Activated naive CD4-positive, alpha-beta T cell treated with anti-CD3 and anti-CD28 coated beads for 36 hours (primary cell): ENCODE measurements at regions of chr10 and their contacts with region 1.

Region 1: DNA sequence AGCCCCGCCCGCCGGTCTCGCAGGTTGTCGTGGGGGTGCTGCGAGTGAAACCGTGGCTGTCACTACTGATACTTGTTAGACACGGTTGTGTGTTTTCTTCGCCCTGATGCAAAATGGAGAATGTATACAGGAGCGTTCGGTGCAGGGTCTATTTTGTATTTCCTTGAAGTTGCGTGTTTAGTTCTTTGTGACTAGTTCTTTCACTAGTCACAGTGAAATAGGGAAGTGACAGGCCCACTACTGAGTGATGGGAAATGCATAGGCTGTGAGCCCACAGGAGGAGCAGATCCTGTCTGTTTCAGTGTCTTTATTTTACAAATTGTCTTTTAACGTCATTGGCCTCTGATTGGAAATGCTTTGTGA is 675 bp downstream of the ABRAXAS2 start:
- DNase-seq: peak; percentile 44
- H3K4me3 Mint-ChIP-seq: peak overlapping the region; percentile 90
- H3K27ac Mint-ChIP-seq: peak overlapping the region; percentile 83
- H3K4me1 Mint-ChIP-seq: peaks cover 17% of the 10 kb centered on the region
- H3K27me3 Mint-ChIP-seq: no peaks in the 10 kb centered on the region

Region 2: DNA sequence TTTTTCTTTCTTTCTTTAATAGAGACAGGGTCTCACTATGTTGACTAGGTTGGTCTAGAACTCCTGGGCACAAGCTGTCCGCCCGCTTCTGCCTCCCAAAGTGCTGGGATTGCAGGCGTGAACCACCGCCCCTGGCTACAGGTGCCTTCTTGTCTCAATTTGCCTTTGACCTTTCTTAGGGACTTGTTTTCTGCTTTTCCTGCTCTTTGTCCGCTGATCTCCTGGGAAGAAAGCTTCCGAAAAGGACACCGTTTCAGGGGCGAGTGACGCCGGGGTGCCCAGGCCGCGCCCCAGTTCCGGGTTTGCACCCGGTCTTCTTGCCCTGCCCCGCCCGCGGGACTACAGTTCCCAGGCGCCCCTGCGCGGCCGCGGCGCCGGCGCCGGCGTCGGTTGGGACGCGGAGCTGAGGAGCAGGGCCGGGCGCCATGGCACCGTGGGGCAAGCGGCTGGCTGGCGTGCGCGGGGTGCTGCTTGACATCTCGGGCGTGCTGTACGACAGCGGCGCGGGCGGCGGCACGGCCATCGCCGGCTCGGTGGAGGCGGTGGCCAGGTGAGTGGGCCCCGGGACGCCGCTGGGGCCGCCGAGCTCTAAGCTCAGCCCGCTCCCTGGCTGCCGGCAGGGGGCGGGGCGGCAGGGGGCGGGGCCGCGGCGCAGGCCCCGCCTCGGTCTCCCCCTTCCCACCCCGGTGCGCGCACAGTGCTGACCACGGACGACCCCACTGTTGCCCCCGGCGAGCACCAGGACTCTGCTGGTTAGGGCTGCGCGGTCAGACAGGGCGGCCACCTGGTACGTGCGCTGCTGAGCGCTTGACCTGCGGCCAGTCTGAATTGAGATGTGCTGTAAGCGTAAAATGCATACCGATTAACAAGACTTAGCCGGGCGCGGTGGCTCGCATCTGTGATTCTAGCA is 340.6 kb before region 1 on chr10 and contains the start of gene LHPP:
- CTCF ChIA-PET with region 1: no interaction called
- intact Hi-C with region 1: loop called (anchors 5 kb)
- DNase-seq: peak; percentile 90
- H3K4me3 Mint-ChIP-seq: peak within 1 kb of the TSS; percentile 77
- H3K27ac Mint-ChIP-seq: peak within 1 kb of the TSS; percentile 88
- H3K4me1 Mint-ChIP-seq: peaks cover 27% of the 10 kb centered on the region
- H3K27me3 Mint-ChIP-seq: peaks cover 2% of the 10 kb centered on the region
- total RNA-seq, gene LHPP: 17.7 TPM

Region 3: GRCh38 chr10:124688889-124689670 is 113.2 kb before region 1 on chr10:
- CTCF ChIA-PET with region 1: interaction called, 3 read pairs
- intact Hi-C with region 1: loop called (anchors 5 kb)
- DNase-seq: peak; percentile 83
- H3K4me3 Mint-ChIP-seq: no peak overlapping the region
- H3K27ac Mint-ChIP-seq: peak overlapping the region; percentile 46
- H3K4me1 Mint-ChIP-seq: peaks cover 74% of the 10 kb centered on the region
- H3K27me3 Mint-ChIP-seq: no peaks in the 10 kb centered on the region

Region 4: GRCh38 chr10:124916585-124917427 is 114.5 kb after region 1 on chr10:
- CTCF ChIA-PET with region 1: no interaction called
- intact Hi-C with region 1: loop called (anchors 1 kb)
- DNase-seq: peak; percentile 97
- H3K4me3 Mint-ChIP-seq: peak overlapping the region; percentile 83
- H3K27ac Mint-ChIP-seq: peak overlapping the region; percentile 85
- H3K4me1 Mint-ChIP-seq: peaks cover 36% of the 10 kb centered on the region
- H3K27me3 Mint-ChIP-seq: no peaks in the 10 kb centered on the region

Region 5: DNA sequence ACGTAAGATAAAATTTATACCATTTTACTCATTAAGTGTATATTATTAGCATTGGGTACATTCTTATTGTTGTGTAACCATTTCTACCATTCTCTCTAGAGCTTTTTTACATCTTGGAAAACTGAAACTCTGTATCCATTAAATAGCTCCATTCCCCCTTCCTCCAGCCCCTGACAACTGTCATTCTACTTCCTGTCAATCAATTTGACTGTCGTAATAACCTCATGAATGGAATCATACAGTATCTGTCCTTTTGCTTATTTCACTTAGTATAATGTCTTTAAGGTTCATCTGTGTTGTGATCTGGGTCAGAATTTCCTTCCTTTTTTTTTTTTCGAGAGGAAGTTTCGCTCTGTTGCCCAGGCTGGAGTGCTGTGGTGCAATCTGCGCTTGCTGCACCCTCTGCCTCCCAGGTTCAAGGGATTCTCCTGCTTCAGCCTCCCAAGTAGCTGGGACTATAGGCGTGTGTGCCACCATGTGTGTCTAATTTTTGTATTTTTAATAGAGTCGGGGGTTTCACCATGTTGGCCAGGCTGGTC is 155.2 kb after region 1 on chr10:
- CTCF ChIA-PET with region 1: no interaction called
- intact Hi-C with region 1: no loop called
- DNase-seq: no peak
- H3K4me3 Mint-ChIP-seq: no peak overlapping the region
- H3K27ac Mint-ChIP-seq: no peak overlapping the region
- H3K4me1 Mint-ChIP-seq: peaks cover 61% of the 10 kb centered on the region
- H3K27me3 Mint-ChIP-seq: no peaks in the 10 kb centered on the region